Sigmoid colon (tissue), 7 donors: ENCODE measurements at regions of chr6 and their contacts with region 1.

Region 1: GRCh38 chr6:15399641-15400470 is 154.0 kb downstream of the JARID2 start:
- DNase-seq: peak; percentile 91
- H3K4me3 ChIP-seq: peak overlapping the region; percentile 20 to 43 (median 40)
- H3K27ac ChIP-seq: peak overlapping the region; percentile 55 to 74 (median 70)
- H3K4me1 ChIP-seq: peaks cover 0 to 48% (median 35%) of the 10 kb centered on the region in 4 donors
- H3K27me3 ChIP-seq: no peaks in the 10 kb centered on the region
- CTCF ChIP-seq: no peak
- EP300 ChIP-seq: no peak
- POLR2A ChIP-seq: no peak

Region 2: GRCh38 chr6:15296735-15297134 is 103.1 kb before region 1 on chr6:
- intact Hi-C with region 1: no loop called
- DNase-seq: no peak
- H3K4me3 ChIP-seq: no peak overlapping the region
- H3K27ac ChIP-seq: no peak overlapping the region
- H3K4me1 ChIP-seq: peaks cover 0 to 35% (median 23%) of the 10 kb centered on the region in 4 donors
- H3K27me3 ChIP-seq: no peaks in the 10 kb centered on the region
- CTCF ChIP-seq: no peak
- EP300 ChIP-seq: no peak
- POLR2A ChIP-seq: no peak

Region 3: DNA sequence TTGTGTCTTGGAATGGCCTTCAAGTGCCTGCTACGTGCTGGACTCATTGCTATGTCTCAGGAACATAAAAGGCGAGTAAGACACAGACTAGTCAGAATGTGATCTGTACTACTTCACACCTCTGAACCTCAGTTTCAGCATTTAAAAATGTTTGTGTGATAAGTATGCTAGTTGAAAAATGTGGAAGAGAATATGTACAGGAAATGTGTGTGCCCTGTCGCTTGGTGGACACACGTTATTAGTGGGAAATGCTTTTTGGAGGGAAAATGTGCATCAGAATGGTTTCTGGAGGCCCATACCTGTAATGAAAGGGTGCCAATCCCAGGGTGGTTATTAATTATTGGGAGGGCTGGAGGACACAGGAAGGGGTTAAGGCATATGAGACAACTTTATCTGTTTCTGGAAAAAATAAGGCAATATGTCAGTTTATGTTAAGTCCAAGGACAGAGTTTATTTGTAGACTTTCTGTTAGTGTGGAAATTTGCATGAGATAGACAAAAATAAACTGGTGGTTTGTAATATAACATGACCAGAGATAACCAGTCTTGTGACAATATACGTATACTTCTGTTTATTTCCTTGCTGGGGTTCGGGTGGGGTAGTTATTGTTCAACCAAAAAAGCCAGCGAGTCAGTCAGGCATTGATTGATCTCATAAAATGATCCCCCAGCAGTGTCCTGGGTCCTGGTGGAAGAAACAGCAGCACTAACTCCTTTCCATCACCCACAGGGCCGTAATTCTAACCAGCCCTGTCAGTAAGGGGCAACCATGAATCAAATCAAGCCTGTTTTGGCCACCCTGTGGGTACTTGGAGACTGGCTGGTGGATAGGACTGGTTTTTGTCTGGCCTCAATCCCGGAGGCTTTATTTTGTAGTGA is 36.1 kb before region 1 on chr6:
- intact Hi-C with region 1: loop called (anchors 5 kb)
- DNase-seq: no peak
- H3K4me3 ChIP-seq: no peak overlapping the region
- H3K27ac ChIP-seq: no peak overlapping the region
- H3K4me1 ChIP-seq: peaks cover 0 to 50% (median 27%) of the 10 kb centered on the region in 4 donors
- H3K27me3 ChIP-seq: no peaks in the 10 kb centered on the region
- CTCF ChIP-seq: no peak
- EP300 ChIP-seq: no peak
- POLR2A ChIP-seq: no peak

Region 4: DNA sequence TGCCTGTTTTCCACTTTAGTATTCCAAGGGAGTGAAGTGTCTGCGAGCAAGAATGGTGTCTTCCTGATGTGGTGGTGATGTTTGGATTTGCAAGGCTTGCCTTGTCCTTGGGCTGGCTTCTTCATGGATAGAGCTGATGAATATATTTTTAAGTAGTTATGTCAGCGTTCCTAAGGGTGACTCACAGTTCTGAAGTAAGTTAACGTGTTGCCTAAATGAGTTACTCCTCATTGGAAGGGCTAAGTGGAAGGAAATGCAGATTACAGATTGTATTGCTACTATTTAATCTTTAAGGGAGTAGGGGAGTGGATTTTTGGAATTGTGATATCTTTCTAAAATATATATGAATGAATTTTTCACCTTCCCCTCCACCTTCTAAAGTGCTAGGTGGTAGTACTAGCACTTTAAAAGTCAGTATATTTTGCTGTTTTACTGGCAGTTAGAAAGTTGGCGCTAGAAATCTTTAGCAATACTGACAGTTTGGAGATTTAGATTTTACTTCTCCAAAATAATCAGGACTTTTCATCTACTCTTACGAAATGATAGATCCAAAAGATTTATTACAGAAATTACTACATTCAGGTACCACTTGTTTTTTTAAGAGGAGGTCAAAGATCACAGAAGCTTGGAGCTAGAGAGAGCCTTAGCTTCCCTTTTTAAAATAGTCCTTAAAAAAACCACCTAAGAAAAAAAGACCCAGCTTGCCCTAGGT is 43.4 kb after region 1 on chr6:
- intact Hi-C with region 1: loop called (anchors 5 kb)
- DNase-seq: no peak
- H3K4me3 ChIP-seq: no peak overlapping the region
- H3K27ac ChIP-seq: peak overlapping the region in 2 of 4 donors; percentile 24 to 30
- H3K4me1 ChIP-seq: peaks cover 0 to 56% (median 37%) of the 10 kb centered on the region in 4 donors
- H3K27me3 ChIP-seq: no peaks in the 10 kb centered on the region
- CTCF ChIP-seq: no peak
- EP300 ChIP-seq: no peak
- POLR2A ChIP-seq: no peak